CD4-positive, alpha-beta T cell (primary cell): ENCODE measurements at regions of chr21 and their contacts with region 1.

Region 1: GRCh38 chr21:42496122-42496900 is at the start of gene RSPH1:
- DNase-seq: peak; percentile 93 to 100 (median 99)
- ATAC-seq: peak; percentile 97
- H3K4me3 ChIP-seq: peak within 1 kb of the TSS; percentile 87
- H3K4me3 Mint-ChIP-seq: peak within 1 kb of the TSS; percentile 89
- H3K27ac ChIP-seq: peak within 1 kb of the TSS; percentile 26 to 76
- H3K27ac Mint-ChIP-seq: peak within 1 kb of the TSS; percentile 84
- H3K4me1 ChIP-seq: peaks cover 19% of the 10 kb centered on the region
- H3K4me1 Mint-ChIP-seq: peaks cover 24% of the 10 kb centered on the region
- H3K27me3 ChIP-seq: no peaks in the 10 kb centered on the region
- H3K27me3 Mint-ChIP-seq: no peaks in the 10 kb centered on the region
- CTCF ChIP-seq: no peak
- total RNA-seq, gene RSPH1: 0.34 to 0.38 TPM

Region 2: DNA sequence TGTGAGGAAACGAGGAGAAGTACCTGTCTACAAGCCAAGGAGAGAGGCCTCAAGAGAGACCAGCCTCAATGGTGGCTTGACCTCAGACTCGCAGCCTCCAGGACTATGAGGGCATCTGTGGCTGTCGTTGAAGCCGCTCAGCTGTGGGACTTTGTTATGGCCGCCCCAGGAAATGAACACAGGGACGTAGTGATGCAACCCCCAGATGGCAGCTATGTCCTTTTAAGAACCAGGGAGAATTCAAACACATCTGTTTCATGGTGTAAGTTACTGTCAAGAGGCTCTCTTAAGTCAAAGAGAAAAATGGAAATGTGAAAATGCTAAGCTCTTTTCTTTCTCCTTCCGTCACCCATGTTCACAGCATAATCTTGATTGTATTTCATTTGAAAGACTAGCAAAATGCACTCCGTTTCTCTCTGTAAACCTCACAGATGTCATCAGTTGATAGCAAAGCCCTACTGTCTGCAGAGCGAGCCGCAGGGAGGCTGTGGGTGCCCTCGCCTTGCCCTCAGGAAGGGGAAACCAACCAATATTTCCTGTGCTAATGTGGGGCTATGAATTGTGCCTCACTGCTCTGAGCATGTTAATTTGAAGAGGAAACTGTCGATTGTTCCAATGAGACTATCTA is 71.3 kb before region 1 on chr21:
- CTCF ChIA-PET with region 1: no interaction called
- POLR2A ChIA-PET with region 1: no interaction called
- intact Hi-C with region 1: loop called (anchors 5 kb)
- DNase-seq: peak; percentile 63 to 92 (median 76)
- ATAC-seq: peak; percentile 86
- H3K4me3 ChIP-seq: peak overlapping the region; percentile 13
- H3K4me3 Mint-ChIP-seq: peak overlapping the region; percentile 59
- H3K27ac ChIP-seq: peak overlapping the region; percentile 78 to 90
- H3K27ac Mint-ChIP-seq: peak overlapping the region; percentile 85
- H3K4me1 ChIP-seq: peaks cover 83% of the 10 kb centered on the region
- H3K4me1 Mint-ChIP-seq: peaks cover 79% of the 10 kb centered on the region
- H3K27me3 ChIP-seq: no peaks in the 10 kb centered on the region
- H3K27me3 Mint-ChIP-seq: no peaks in the 10 kb centered on the region
- CTCF ChIP-seq: no peak

Region 3: DNA sequence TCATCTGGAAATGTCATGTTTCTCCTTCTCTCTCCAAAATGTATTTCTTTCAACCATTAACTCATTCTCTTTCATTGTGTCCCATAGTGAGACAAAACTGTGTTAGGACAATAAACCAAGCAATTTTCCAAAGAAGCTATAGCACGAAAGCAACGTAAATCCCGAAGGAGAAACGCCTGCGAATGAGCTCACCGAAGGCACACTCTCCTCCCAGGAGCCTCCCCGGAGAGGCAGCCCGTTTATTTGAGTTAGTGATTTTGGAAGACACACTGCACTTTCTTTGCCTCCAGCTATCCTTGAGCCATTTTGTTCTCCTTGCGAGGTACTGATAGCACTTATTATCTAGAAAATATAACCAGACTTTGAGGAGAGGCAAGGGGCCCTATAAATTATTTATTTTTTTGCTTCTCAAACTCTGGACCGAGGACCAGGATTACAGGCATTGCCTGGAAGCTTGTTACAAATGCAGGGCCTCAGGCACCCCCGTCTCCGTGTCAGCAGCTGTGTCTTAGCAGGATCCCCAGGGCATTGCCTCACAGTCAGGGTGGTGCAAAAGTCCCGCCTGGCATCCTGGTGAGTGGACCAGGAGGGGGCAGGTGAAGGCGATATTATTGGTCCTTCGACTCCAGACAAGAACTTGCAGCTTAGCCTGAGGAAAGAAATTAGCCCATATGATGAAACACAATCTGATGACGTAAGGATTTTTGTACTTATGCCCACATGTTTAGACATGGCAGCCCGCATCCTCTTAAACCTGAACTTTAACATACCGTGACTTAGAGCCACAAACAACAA is 41.3 kb before region 1 on chr21:
- CTCF ChIA-PET with region 1: no interaction called
- POLR2A ChIA-PET with region 1: no interaction called
- intact Hi-C with region 1: loop called in 1 of 2 experiments (anchors 5 kb)
- DNase-seq: no peak
- ATAC-seq: no peak
- H3K4me3 ChIP-seq: no peak overlapping the region
- H3K4me3 Mint-ChIP-seq: no peak overlapping the region
- H3K27ac ChIP-seq: no peak overlapping the region
- H3K27ac Mint-ChIP-seq: peak overlapping the region; percentile 79
- H3K4me1 ChIP-seq: peaks cover 25% of the 10 kb centered on the region
- H3K4me1 Mint-ChIP-seq: peaks cover 32% of the 10 kb centered on the region
- H3K27me3 ChIP-seq: no peaks in the 10 kb centered on the region
- H3K27me3 Mint-ChIP-seq: no peaks in the 10 kb centered on the region
- CTCF ChIP-seq: no peak

Region 4: GRCh38 chr21:42463861-42464520 is 32.3 kb before region 1 on chr21:
- CTCF ChIA-PET with region 1: no interaction called
- POLR2A ChIA-PET with region 1: no interaction called
- intact Hi-C with region 1: loop called in 1 of 2 experiments (anchors 1 kb)
- DNase-seq: peak; percentile 43 to 90 (median 58)
- ATAC-seq: peak; percentile 71
- H3K4me3 ChIP-seq: no peak overlapping the region
- H3K4me3 Mint-ChIP-seq: peak overlapping the region; percentile 66
- H3K27ac ChIP-seq: peak overlapping the region in 1 of 2 donors; percentile 32
- H3K27ac Mint-ChIP-seq: peak overlapping the region; percentile 80
- H3K4me1 ChIP-seq: peaks cover 52% of the 10 kb centered on the region
- H3K4me1 Mint-ChIP-seq: peaks cover 77% of the 10 kb centered on the region
- H3K27me3 ChIP-seq: no peaks in the 10 kb centered on the region
- H3K27me3 Mint-ChIP-seq: no peaks in the 10 kb centered on the region
- CTCF ChIP-seq: no peak

Region 5: DNA sequence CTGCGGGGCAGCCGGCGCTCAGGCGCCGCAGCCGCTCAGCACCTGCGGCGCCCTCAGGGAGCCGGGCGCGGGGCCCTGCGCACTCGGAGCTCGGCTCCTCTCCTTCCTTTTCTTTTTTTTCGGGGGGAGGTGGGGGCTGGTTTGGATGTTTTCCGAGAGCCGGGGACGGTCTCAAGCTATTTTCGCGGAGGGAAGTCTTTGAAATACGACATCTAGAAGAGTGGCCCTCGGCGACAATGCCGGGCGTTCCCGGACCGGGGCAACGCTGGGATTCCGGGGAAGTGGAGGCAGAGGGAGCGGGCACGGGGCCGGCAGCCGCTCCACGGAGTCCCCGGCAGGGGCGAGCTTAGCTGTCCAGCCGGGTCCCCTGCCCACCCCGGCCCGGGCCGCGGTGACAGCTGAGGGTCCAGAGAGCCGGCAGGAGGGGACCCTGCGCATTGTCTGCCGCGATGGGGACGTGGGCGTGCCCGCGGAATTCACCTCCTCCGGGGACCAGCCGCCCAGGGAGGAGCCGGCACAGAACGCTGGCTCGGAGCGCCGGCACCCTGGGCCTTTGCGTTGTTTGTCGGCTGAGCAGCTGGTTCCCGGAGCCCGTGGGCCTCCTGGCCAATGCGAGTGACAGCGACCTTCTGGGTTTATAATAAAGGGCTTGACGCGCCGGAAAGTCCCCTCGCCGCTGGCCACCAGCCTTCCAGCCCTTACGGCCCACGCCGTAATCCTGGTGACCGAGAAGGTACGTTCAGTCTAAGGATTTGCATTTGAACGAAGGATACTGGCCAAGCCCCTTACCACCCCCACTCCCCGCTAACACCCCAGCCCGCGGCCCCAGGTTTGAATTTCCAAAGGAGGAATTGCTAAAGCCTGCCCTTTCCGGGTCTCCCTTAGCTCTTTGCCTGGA is 17.9 kb after region 1 on chr21:
- CTCF ChIA-PET with region 1: no interaction called
- POLR2A ChIA-PET with region 1: interaction called, 14 read pairs
- intact Hi-C with region 1: loop called in 1 of 2 experiments (anchors 1 kb)
- DNase-seq: peak; percentile 36 to 81 (median 53)
- ATAC-seq: peak; percentile 84
- H3K4me3 ChIP-seq: peak overlapping the region; percentile 82
- H3K4me3 Mint-ChIP-seq: peak overlapping the region; percentile 88
- H3K27ac ChIP-seq: peak overlapping the region; percentile 48 to 65
- H3K27ac Mint-ChIP-seq: peak overlapping the region; percentile 76
- H3K4me1 ChIP-seq: peaks cover 28% of the 10 kb centered on the region
- H3K4me1 Mint-ChIP-seq: peaks cover 31% of the 10 kb centered on the region
- H3K27me3 ChIP-seq: no peaks in the 10 kb centered on the region
- H3K27me3 Mint-ChIP-seq: no peaks in the 10 kb centered on the region
- CTCF ChIP-seq: no peak

Region 6: GRCh38 chr21:42724226-42724920 is 228.1 kb after region 1 on chr21:
- CTCF ChIA-PET with region 1: no interaction called
- POLR2A ChIA-PET with region 1: no interaction called
- intact Hi-C with region 1: no loop called
- DNase-seq: no peak
- ATAC-seq: no peak
- H3K4me3 ChIP-seq: no peak overlapping the region
- H3K4me3 Mint-ChIP-seq: no peak overlapping the region
- H3K27ac ChIP-seq: no peak overlapping the region
- H3K27ac Mint-ChIP-seq: no peak overlapping the region
- H3K4me1 ChIP-seq: peaks cover 6% of the 10 kb centered on the region
- H3K4me1 Mint-ChIP-seq: peaks cover 13% of the 10 kb centered on the region
- H3K27me3 ChIP-seq: no peaks in the 10 kb centered on the region
- H3K27me3 Mint-ChIP-seq: no peaks in the 10 kb centered on the region
- CTCF ChIP-seq: no peak

Region 7: GRCh38 chr21:42892931-42893755 is 396.8 kb after region 1 on chr21 and contains the start of gene NDUFV3:
- CTCF ChIA-PET with region 1: no interaction called
- POLR2A ChIA-PET with region 1: no interaction called
- intact Hi-C with region 1: loop called in 1 of 2 experiments (anchors 5 kb)
- DNase-seq: peak; percentile 100
- ATAC-seq: peak; percentile 93
- H3K4me3 ChIP-seq: peak within 1 kb of the TSS; percentile 76
- H3K4me3 Mint-ChIP-seq: peak within 1 kb of the TSS; percentile 91
- H3K27ac ChIP-seq: peak within 1 kb of the TSS; percentile 86
- H3K27ac Mint-ChIP-seq: peak within 1 kb of the TSS; percentile 97
- H3K4me1 ChIP-seq: peaks cover 12% of the 10 kb centered on the region
- H3K4me1 Mint-ChIP-seq: peaks cover 19% of the 10 kb centered on the region
- H3K27me3 ChIP-seq: no peaks in the 10 kb centered on the region
- H3K27me3 Mint-ChIP-seq: no peaks in the 10 kb centered on the region
- CTCF ChIP-seq: no peak
- total RNA-seq, gene NDUFV3: 15.3 to 15.8 TPM